GM10248 (cell line): ENCODE measurements at regions of chr16 and their contacts with region 1.

Region 1: GRCh38 chr16:2003827-2004641 is 5.6 kb downstream of the ZNF598 start:
- DNase-seq: peak; percentile 93
- CTCF ChIP-seq: peak; percentile 90

Region 2: GRCh38 chr16:1983544-1984346 is 20.3 kb before region 1 on chr16 and contains the start of gene GFER:
- CTCF ChIA-PET with region 1: interaction called, 30 read pairs
- POLR2A ChIA-PET with region 1: no interaction called
- DNase-seq: peak; percentile 97
- CTCF ChIP-seq: peak; percentile 68

Region 3: GRCh38 chr16:1991948-1992703 is 11.9 kb before region 1 on chr16:
- CTCF ChIA-PET with region 1: interaction called, 63 read pairs
- POLR2A ChIA-PET with region 1: no interaction called
- DNase-seq: peak; percentile 100
- CTCF ChIP-seq: no peak

Region 4: DNA sequence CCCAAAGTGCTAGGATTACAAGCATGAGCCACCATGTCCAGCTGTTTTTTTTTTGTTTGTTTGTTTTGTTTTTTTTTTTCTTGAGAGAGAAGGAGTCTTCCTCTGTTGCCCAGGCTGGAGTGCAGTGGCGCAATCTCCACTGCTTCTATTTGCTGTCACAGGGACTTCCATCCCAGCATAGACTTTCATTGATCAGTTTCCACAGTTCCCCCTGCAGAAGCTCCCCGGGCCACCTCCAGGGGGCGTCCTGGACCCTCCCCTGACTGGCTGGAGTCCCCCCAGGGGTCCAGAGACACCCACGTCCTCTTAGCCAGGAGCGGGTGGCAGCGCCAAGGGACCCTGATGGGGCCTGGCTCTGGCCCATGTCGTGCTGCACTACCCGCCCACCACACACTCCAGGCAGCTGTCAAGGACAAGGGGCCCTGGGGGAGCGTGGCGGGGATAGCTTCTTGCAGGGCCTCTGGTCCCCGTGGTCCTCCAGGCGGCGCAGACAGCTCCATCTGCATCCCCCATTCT is 12.4 kb after region 1 on chr16:
- CTCF ChIA-PET with region 1: interaction called, 18 read pairs
- POLR2A ChIA-PET with region 1: no interaction called
- DNase-seq: no peak
- CTCF ChIP-seq: peak; percentile 9

Region 5: DNA sequence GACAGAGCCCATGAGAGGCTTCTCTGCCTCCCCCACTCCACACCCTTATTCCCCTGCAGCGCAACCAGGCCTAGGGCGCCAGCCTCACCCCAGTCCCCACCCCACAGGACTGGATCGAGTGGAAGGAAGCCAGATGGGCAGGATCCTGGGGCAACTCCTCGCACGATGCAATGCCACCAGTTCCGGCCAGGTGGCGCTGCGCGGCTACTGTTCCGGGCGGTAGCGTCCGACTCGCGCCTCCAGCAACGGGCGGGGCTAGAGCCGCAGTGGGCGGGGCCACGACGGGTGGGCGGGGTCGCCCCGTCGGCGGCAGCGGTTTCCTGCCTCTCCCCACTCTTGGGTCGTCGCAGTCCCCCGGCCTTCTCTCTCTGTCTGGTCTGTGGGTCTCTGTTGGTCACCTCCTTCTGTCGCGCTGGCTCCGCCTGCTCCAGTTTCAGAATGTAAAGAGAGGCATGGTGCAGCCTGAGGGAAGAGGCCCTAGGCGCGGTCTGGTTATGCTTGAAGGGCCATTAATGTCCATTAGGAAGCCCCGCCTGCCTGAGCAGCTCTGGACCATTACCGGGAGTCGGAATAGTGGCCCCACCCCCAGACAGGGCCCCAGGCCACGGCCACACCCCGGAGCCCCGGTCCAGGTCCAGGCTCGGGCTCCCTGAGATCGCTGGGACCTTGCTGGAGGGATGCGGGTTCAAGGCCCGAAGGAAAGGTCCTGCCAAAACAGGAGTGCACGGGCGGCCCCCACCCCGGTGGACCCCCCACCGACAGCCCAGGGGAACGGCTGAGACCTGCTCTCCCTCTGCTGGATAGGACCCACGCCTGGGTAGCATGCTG is 19.3 kb after region 1 on chr16:
- CTCF ChIA-PET with region 1: interaction called, 18 read pairs
- POLR2A ChIA-PET with region 1: no interaction called
- DNase-seq: peak; percentile 98
- CTCF ChIP-seq: peak; percentile 95

Region 6: GRCh38 chr16:2063861-2064260 is 59.8 kb after region 1 on chr16:
- CTCF ChIA-PET with region 1: no interaction called
- POLR2A ChIA-PET with region 1: no interaction called
- DNase-seq: no peak
- CTCF ChIP-seq: no peak

Region 7: DNA sequence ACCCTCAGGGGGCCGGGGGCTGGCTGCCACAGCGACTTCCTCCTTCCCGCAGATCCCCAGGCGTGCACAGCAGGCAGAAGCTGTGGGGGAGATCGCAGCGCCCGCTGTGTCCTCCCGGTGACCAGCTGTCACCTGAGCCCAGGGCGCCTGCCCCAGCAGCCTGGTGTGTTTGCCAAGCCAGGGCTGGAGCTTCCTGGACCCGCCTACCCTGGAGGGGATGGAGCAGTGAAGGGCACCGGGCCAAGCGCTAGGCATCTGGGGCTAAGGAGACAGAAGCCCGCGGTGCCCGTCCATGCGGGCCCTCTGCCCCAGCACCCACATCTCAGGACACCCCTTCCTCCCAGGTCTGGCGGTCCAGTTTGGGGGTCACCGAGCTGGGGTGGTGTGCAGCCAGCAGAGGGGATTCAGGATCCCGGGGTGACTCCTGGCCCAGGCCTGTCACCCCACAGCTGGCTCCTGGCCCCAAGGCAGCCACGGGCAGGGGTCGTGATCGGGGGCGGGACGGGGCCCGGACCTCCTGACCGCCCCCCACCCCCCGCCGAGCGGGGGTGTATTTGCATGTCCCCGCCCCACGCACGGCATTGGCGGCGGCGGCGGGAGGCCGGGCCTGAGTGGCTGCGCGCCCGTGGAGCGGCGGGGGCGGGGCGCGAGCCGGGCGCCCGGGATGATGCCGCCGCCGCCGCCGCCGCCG is 144.1 kb after region 1 on chr16 and contains the start of gene RAB26:
- CTCF ChIA-PET with region 1: interaction called, 43 read pairs
- POLR2A ChIA-PET with region 1: no interaction called
- DNase-seq: peak; percentile 48
- CTCF ChIP-seq: no peak